PC-9 (cell line): ENCODE measurements at regions of chr22 and their contacts with region 1.

Region 1: GRCh38 chr22:38220163-38220562 is 18.4 kb downstream of the MAFF start:
- DNase-seq: no peak
- H3K4me3 ChIP-seq: no peak overlapping the region
- H3K27ac ChIP-seq: peak overlapping the region; percentile 89
- H3K4me1 ChIP-seq: peaks cover 38% of the 10 kb centered on the region
- H3K27me3 ChIP-seq: no peaks in the 10 kb centered on the region
- CTCF ChIP-seq: no peak

Region 2: DNA sequence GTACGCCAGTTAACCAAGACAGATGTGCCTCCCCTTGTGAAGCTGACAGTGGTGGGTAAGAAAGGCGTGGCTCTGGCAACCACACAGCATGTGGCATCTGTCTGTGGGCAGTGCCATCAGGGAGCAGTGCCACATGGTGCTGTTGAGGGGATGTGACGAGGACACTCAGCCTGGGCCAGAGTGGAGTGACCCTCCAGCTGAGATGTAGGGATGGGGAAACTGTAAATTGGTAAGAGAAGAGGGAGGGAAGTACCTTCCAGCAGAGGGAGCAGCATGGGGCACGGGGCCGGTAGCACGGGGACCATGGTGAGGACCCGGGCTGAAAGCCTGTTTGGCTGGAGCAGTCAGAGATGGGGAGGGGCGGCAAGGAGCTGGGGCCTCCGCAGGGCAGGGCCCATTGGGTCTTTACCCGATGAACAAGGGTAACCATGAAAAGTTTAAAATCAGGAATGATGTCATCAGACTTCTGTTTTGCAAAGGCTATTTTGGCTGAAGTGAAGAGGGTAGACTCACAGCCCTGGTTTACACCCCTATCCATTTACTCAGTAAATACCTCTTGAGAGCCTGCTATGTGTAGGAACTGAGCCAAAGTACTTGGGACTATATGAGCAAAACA is 1121.1 kb before region 1 on chr22:
- CTCF ChIA-PET with region 1: no interaction called
- POLR2A ChIA-PET with region 1: no interaction called
- intact Hi-C with region 1: no loop called
- DNase-seq: no peak
- H3K4me3 ChIP-seq: no peak overlapping the region
- H3K27ac ChIP-seq: no peak overlapping the region
- H3K4me1 ChIP-seq: no peaks in the 10 kb centered on the region
- H3K27me3 ChIP-seq: peaks cover 42% of the 10 kb centered on the region
- CTCF ChIP-seq: 0 out of 2 replicates have a peak, but pooled peaks have one; percentile 36

Region 3: DNA sequence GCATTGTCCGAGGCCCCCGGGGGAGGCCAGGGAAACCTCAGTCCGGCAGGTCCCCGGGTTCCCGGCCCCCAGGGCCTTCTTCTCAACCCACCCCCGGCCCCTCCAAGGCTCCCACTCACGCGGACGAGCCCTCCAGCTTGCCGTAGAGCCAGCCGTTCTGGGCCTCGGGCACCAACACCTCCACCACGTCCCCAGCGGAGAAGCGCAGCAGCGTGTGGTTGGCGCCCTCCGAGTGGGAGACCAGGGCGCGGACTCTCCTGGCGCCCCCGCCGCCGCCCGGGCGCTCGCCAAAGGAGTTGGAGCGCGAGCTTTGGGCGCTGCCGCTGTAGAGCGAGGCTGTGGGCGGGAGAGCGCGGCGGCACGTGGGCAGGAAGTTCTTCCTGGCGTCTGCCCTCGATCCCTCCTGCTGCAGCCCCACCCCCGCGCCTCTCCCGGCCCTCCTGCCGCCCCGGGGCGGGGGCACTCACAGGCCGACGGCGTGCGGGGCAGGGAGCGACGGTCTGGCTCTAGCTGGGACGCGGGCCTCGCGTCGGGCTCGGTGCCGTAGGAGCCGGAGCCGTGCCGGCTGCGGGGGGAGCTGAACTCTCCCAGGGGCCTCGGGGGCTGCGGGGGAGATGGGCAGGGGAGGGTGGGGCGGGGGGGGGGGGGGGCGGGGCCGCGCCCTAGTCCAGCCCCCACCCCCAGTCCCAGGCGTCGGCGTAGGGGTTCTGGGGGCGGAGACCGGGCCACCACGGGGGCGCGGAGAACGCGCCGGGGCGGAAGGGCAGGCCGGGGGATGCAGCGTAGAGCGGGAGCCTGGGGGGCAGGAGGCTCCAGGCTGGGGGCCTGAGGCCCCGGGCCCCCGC is 131.3 kb before region 1 on chr22:
- CTCF ChIA-PET with region 1: interaction called, 19 read pairs
- POLR2A ChIA-PET with region 1: no interaction called
- intact Hi-C with region 1: no loop called
- DNase-seq: no peak
- H3K4me3 ChIP-seq: no peak overlapping the region
- H3K27ac ChIP-seq: no peak overlapping the region
- H3K4me1 ChIP-seq: no peaks in the 10 kb centered on the region
- H3K27me3 ChIP-seq: no peaks in the 10 kb centered on the region
- CTCF ChIP-seq: no peak

Region 4: DNA sequence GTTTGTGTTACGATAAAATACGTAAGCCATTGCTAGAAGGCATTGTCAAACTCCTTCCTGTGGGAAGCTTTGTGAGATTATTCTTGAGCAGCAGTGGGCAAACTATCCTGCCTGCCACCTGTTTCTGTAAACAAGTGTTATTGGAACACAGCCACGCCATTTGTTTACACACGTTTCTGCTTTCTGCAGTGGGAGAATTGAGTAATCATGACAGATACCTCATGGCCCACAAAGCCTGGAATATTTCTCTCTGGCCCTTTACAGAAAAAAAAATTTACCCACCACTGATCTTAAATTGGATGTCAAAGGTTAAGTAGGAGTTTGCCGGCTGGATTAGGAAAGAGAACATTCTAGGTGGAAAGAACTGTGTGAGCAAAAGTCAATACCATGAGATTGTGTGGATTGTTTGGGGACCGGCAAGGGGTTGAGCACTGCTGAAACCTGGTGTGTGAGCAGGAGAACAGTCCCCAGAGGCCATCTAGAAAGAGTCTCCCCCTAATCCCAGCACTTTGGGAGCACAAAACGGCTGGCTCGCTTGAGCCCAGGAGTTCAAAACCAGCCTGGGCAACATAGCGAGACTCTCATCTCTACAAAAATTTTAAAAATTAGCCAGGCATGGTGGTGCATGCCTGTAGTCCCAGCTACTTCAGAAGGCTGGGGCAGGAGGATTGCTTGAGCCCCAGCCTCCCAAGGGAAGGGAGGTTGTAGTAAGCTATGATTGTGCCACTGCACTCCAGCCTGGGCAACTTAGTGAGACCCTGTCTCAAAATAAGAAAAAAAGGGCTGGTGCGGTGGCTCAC is 32.5 kb before region 1 on chr22:
- CTCF ChIA-PET with region 1: no interaction called
- POLR2A ChIA-PET with region 1: no interaction called
- intact Hi-C with region 1: no loop called
- DNase-seq: peak in 1 of 2 experiments; percentile 75
- H3K4me3 ChIP-seq: no peak overlapping the region
- H3K27ac ChIP-seq: peak overlapping the region; percentile 30
- H3K4me1 ChIP-seq: peaks cover 53% of the 10 kb centered on the region
- H3K27me3 ChIP-seq: no peaks in the 10 kb centered on the region
- CTCF ChIP-seq: no peak

Region 5: DNA sequence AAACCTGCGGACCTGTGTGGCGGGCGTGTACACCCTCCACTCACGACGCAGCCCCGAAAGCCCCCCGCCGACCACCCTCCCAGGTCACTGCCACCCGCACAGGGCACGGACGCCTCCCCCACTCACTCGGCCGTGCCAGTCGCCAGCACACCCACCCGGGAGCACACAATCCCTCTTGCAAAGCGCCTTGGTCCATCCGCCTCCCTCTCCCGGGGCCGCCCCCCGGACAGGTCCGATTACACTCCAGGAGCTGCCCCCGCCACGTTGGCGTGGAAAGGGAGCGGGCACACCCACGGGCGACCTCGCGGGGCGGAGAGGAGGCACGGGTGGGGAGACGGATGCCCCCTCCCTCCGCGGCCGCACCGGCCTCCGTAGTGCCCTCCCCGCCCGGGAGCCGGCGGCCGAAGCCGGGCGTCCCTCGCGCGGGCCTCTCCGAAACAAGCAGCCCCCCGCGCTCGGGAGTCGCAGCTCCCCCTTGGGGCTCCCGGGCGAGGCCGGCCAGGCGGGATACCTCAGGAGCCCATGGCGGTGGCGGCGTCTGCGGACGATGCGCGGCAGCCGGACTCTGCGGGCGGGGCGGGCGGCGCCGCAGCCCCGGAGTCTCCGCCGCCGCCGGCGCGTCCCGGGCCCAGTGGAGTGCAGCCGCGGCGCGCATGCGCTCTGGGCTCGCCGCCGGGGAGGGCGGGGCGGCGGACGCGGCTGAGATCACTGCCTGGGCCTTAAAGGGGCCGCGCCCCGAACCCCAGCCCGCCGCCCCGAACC is 52.4 kb after region 1 on chr22 and contains the start of gene TMEM184B:
- CTCF ChIA-PET with region 1: no interaction called
- POLR2A ChIA-PET with region 1: no interaction called
- intact Hi-C with region 1: no loop called
- DNase-seq: peak in 1 of 2 experiments; percentile 86
- H3K4me3 ChIP-seq: peak within 1 kb of the TSS; percentile 90
- H3K27ac ChIP-seq: peak within 1 kb of the TSS; percentile 62
- H3K4me1 ChIP-seq: peaks cover 41% of the 10 kb centered on the region
- H3K27me3 ChIP-seq: no peaks in the 10 kb centered on the region
- CTCF ChIP-seq: no peak
- total RNA-seq, gene TMEM184B: 185 and 192 TPM in 2 replicates